CD8-positive, alpha-beta T cell (primary cell): ENCODE measurements at regions of chr3 and their contacts with region 1.

Region 1: DNA sequence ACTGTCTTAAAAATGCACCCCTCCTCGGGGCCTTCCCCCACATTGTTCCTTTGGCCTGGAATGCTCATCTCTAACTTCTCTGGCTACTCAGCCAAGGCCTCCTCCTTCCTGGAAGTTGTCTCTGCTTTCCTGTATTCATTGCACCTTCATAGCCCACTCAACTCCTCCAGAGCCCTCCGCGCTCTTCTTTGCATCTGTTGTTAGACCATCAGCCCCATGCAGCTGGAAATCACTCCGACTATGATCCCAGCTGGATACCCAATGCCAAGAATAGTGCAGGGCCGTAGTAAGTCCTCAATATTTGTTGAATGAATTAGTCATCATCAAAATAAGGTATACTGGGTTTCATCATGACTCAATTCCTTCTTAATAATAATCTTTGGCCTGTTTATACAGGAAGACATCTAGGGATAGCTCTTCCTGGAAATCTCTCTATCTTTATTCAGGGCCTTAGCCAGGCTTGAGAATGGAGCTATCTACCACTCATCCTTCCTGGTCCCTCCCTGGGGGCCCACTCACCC is 112.7 kb downstream of the SYNPR start:
- DNase-seq: no peak
- ATAC-seq: no peak
- H3K4me3 ChIP-seq: no peak overlapping the region
- H3K4me3 Mint-ChIP-seq: no peak overlapping the region
- H3K27ac ChIP-seq: no peak overlapping the region
- H3K27ac Mint-ChIP-seq: no peak overlapping the region
- H3K4me1 ChIP-seq: no peaks in the 10 kb centered on the region
- H3K4me1 Mint-ChIP-seq: no peaks in the 10 kb centered on the region
- H3K27me3 ChIP-seq: no peaks in the 10 kb centered on the region
- H3K27me3 Mint-ChIP-seq: no peaks in the 10 kb centered on the region
- CTCF ChIP-seq: no peak

Region 2: GRCh38 chr3:63492464-63492863 is 101.7 kb after region 1 on chr3:
- CTCF ChIA-PET with region 1: no interaction called
- POLR2A ChIA-PET with region 1: no interaction called
- intact Hi-C with region 1: loop called in 1 of 2 experiments (anchors 5 kb)
- DNase-seq: no peak
- ATAC-seq: no peak
- H3K4me3 ChIP-seq: no peak overlapping the region
- H3K4me3 Mint-ChIP-seq: no peak overlapping the region
- H3K27ac ChIP-seq: no peak overlapping the region
- H3K27ac Mint-ChIP-seq: no peak overlapping the region
- H3K4me1 ChIP-seq: no peaks in the 10 kb centered on the region
- H3K4me1 Mint-ChIP-seq: no peaks in the 10 kb centered on the region
- H3K27me3 ChIP-seq: no peaks in the 10 kb centered on the region
- H3K27me3 Mint-ChIP-seq: no peaks in the 10 kb centered on the region
- CTCF ChIP-seq: no peak